AG04449 (cell line): ENCODE measurements at regions of chr11 and their contacts with region 1.

Region 1: DNA sequence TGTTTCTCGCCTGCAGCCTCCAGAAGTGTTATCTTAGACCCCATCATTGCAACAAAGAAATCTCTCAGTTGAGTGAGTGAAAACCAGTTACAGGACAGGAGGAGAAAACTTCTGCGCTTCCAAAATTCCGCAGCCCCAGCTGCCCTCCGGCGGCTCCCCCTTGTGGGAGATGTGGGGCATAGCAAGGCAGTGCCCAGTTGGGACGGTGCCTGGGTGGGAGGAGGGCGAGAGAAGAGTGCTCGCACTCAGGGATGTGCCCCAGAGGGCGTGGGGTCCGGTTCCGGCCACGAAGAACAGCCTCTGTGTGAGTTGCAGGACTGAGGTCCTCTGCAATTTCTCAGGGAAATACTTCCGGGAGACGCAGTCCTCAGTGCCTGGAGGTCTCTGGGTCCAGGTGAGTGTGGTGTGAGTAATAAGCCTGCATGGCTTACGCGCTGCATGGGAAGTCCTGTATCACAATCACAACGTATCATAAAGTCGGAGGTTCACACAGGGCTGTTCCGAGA is 87.0 kb upstream of the BLID start:
- DNase-seq: no peak
- H3K4me3 ChIP-seq: peak overlapping the region; percentile 71
- CTCF ChIP-seq: peak; percentile 97

Region 2: DNA sequence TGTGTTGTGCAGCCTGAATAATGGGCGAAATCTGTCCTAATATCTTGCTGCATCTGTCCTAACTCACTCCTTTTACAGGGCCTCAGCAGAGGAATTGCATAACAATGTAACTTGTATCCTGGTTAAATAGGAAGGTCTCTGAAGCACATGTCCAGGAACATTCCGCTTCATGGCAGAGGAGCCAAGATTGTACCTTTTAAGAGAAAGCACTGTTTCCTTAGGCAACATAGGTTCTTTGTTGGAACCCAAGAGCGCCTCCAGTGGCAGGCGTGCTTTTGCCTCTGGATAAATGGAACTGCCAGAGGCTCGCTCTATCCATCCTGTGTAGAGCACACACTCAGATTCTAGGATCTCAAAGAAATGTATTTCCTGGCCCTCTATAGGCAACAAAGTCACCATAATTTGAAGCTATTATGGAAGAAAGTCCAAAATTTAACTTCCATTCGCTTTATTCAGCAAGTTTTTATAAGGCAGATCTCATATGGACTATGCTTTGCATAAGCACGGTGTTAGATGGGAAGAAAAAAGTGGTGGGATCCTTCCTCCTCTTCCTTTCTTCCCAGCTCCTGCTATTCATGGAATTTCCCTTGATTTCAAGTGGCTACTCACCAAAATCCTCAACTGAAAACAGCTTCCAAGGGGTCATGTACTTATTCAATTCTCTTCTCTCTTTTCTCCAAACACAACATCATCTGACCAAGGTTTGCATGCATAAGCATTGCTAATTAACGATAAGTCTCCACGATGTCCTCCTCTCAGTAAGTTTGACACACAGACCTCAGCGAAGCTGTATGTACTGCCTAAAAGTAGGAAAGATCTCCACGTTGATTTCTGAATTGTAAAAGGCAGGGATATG is 87.3 kb before region 1 on chr11 and contains the start of gene BLID:
- CTCF ChIA-PET with region 1: interaction called, 11 read pairs
- POLR2A ChIA-PET with region 1: no interaction called
- DNase-seq: no peak
- H3K4me3 ChIP-seq: no peak within 1 kb of the TSS
- CTCF ChIP-seq: peak; percentile 40

Region 3: GRCh38 chr11:122153746-122154145 is 49.3 kb before region 1 on chr11:
- CTCF ChIA-PET with region 1: interaction called, 11 read pairs
- POLR2A ChIA-PET with region 1: no interaction called
- DNase-seq: no peak
- H3K4me3 ChIP-seq: no peak overlapping the region
- CTCF ChIP-seq: no peak

Region 4: DNA sequence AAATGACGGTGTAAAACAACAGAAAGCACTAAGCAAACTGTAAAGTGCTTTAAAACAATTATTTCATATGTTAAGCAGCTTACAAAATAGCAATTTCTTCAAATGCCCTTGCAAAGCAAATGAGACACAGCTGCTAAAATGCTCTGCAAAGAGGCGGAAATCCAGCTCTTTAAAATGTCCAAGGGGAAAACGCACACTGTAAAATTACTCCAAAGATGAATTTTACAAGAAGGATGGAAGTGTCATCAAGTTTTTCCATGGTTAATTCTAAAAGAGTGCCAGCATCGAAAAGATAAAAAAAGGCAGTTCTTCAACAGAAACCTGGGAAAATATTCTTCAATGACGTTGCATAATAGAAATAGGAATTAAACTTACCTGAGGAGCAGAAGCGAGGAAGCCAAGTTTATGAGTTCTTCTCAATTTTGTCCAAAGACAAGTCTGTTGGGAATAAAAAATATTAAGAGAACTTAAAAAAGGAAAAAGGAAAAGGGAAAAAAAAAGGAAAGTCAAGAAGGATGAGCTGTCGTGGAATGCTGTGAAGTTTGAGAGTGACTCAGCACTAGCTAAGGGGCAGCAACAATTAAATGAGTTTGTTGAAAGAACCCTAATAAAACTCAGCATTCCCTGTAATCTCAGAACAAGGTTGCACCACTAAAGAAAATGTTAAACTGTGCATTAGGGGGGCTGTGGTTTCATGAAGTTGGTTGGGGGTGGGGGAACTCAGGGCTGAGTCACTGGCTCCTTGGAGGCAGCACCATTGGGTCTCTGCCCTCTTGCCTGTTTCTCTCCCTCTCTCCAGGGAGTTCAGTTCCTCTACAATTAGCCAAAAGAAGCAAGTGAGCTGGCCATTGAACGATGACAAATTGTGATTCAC is 22.8 kb before region 1 on chr11:
- CTCF ChIA-PET with region 1: interaction called, 30 read pairs
- POLR2A ChIA-PET with region 1: interaction called, 24 read pairs
- DNase-seq: peak; percentile 95
- H3K4me3 ChIP-seq: peak overlapping the region; percentile 59
- CTCF ChIP-seq: no peak

Region 5: GRCh38 chr11:122215244-122215992 is 12.4 kb after region 1 on chr11:
- CTCF ChIA-PET with region 1: interaction called, 64 read pairs
- POLR2A ChIA-PET with region 1: interaction called, 11 read pairs
- DNase-seq: peak; percentile 96
- H3K4me3 ChIP-seq: no peak overlapping the region
- CTCF ChIP-seq: peak; percentile 92

Region 6: GRCh38 chr11:122234257-122234656 is 31.3 kb after region 1 on chr11:
- CTCF ChIA-PET with region 1: no interaction called
- POLR2A ChIA-PET with region 1: no interaction called
- DNase-seq: no peak
- H3K4me3 ChIP-seq: no peak overlapping the region
- CTCF ChIP-seq: no peak